ENCODE measurements at regions of chr17 and their contacts with region 1.

Region 1: DNA sequence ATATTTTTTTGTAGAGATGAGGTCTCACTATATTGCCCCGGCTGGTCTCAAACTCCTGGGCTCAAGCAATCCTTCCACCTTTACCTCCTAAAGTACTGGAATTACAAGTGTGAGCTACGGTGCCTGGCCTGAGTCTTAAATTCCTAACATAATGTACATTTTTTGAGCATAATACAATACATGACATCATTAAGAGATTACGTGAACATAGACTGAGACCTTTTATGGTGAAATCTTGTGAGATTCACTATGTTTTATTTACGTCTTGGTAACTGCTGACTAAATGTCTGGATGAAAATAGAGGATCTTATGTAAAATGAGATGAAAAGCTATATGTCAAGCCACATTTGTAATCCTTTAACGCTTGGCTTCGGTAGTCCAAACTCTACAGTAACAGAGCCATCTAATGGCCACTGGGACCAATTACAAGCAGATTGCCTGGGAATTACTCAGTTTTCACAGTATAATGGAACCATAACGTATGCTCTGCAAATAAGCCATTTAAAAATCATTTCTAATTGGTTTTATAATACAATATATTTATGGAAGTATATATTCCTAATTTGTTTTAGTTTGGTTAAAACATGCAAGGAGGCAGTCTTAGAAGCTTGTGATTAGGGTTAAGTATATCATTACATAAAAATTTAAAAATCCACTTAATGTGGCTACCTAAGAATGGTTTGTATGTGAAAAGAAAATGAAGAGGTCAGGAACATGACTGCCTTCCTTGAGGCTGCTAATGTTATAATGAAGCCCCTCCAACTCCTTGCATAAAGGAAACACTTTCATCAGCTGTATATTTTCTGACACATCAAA is 8.1 kb upstream of the EFCAB13 start:
- DNase-seq: peak; percentile 89
- H3K4me3 ChIP-seq: no peak overlapping the region
- H3K27ac ChIP-seq: peak overlapping the region; percentile 90
- H3K4me1 ChIP-seq: peaks cover 46% of the 10 kb centered on the region
- H3K27me3 ChIP-seq: no peaks in the 10 kb centered on the region
- CTCF ChIP-seq: peak; percentile 56 to 63
- POLR2A ChIP-seq: no peak

Region 2: GRCh38 chr17:46940621-46941404 is 374.8 kb before region 1 on chr17:
- CTCF ChIA-PET with region 1: interaction called, 30 read pairs
- POLR2A ChIA-PET with region 1: no interaction called
- dilution Hi-C with region 1: no loop called
- intact Hi-C with region 1: loop called (anchors 5 kb)
- DNase-seq: peak; percentile 78
- H3K4me3 ChIP-seq: no peak overlapping the region
- H3K27ac ChIP-seq: no peak overlapping the region
- H3K4me1 ChIP-seq: peaks cover 11% of the 10 kb centered on the region
- H3K27me3 ChIP-seq: no peaks in the 10 kb centered on the region
- CTCF ChIP-seq: peak; percentile 90 to 95
- POLR2A ChIP-seq: peak; percentile 40

Region 3: GRCh38 chr17:47162013-47162622 is 153.5 kb before region 1 on chr17:
- CTCF ChIA-PET with region 1: interaction called, 23 read pairs
- POLR2A ChIA-PET with region 1: no interaction called
- dilution Hi-C with region 1: no loop called
- intact Hi-C with region 1: loop called (anchors 5 kb)
- DNase-seq: peak; percentile 68
- H3K4me3 ChIP-seq: no peak overlapping the region
- H3K27ac ChIP-seq: no peak overlapping the region
- H3K4me1 ChIP-seq: no peaks in the 10 kb centered on the region
- H3K27me3 ChIP-seq: no peaks in the 10 kb centered on the region
- CTCF ChIP-seq: no peak
- POLR2A ChIP-seq: no peak

Region 4: DNA sequence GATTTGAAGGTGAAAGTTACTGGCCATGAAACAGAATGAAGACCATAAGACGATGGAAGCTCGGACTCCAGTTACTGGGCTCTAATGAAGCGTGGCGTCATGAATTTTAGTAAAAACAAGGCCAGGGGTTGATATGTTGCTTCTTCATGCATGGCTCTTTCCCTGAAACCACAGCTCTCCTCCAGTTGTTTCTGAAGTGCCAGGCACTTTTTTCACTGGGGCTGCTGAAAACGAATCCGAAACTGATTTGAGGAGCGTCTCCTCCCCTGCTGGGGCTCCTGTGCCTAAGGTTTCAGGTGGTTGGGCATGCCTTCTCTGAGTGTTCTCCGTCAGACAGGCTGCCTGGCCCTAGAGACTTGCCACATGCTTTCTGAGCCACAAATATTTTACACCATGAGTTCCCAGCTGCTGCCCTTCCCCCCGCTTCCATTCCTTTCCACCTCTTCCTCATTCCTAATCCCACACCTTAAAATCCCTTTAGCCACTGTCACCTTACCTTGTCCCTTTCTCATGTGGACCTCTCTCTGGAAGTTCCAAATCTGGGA is 110.2 kb before region 1 on chr17:
- CTCF ChIA-PET with region 1: interaction called, 15 read pairs
- POLR2A ChIA-PET with region 1: no interaction called
- dilution Hi-C with region 1: no loop called
- intact Hi-C with region 1: no loop called
- DNase-seq: no peak
- H3K4me3 ChIP-seq: no peak overlapping the region
- H3K27ac ChIP-seq: no peak overlapping the region
- H3K4me1 ChIP-seq: no peaks in the 10 kb centered on the region
- H3K27me3 ChIP-seq: no peaks in the 10 kb centered on the region
- CTCF ChIP-seq: no peak
- POLR2A ChIP-seq: no peak

Region 5: DNA sequence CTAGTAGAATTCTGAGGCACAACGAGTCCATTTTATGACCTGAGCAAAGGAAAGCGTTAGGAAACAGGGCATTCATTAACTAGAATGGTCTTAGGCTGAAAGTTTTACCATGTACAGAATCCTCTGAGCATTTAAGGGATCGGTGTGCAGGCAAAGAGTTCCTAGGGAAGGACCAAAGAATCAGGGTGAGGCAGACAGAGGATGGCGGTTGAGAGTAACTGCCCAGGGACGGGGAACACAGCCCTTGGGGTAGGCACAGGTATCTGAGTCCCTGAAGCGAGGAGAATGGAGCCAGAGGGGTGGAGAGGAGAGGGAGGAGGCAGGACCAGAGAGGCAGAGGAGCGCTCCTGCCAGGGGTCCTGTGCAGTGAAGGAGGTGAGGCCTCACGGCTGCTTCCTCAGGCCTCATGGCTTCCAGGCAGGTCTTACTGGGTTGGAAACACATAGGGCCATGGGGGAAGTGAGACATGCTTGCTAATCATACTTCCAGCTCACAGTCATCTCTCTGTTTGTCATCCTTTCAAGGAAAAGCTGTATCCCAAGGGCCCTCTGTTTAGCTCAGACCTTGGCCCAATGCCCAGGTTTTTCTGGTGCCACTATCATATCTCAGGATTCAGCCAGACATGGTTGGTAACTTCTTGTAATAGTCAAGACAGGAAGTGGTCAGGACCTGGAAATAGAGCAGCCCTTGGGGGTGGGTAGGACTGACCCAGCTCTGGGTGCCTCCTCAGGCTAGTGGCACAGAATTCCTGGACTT is 75.9 kb before region 1 on chr17:
- CTCF ChIA-PET with region 1: interaction called, 53 read pairs
- POLR2A ChIA-PET with region 1: interaction called, 8 read pairs
- dilution Hi-C with region 1: no loop called
- intact Hi-C with region 1: loop called (anchors 1 kb)
- DNase-seq: peak; percentile 99
- H3K4me3 ChIP-seq: no peak overlapping the region
- H3K27ac ChIP-seq: peak overlapping the region; percentile 100
- H3K4me1 ChIP-seq: peaks cover 24% of the 10 kb centered on the region
- H3K27me3 ChIP-seq: no peaks in the 10 kb centered on the region
- CTCF ChIP-seq: no peak
- POLR2A ChIP-seq: peak; percentile 80

Region 6: DNA sequence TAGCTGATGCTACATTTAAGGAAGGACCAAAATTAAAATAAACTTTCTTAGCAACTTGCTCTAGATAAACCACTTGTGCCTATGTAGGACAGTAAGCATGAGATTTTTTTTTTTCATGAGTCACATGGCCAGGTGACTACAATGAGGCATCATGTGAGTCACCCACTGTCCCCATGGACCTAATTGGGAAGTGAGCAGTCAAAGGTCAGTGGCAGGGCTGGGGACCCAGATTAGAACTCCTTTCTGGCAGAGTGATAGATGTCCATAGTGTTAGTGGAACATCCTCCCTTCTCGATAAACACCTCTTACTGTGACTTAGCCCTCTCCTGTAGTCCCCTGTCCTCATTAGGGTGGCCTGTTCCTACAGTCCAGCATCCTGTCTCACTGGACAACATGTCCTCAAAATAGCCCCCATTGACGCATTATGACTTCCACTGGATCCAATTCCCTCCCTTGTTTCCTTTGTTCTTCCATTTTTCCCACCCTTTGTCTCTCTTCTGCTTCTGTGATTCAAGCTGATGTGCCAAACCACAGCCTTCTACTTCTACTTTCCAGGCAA is 49.6 kb before region 1 on chr17:
- CTCF ChIA-PET with region 1: interaction called, 10 read pairs
- POLR2A ChIA-PET with region 1: no interaction called
- dilution Hi-C with region 1: no loop called
- intact Hi-C with region 1: no loop called
- DNase-seq: peak; percentile 43
- H3K4me3 ChIP-seq: no peak overlapping the region
- H3K27ac ChIP-seq: peak overlapping the region; percentile 42
- H3K4me1 ChIP-seq: peaks cover 37% of the 10 kb centered on the region
- H3K27me3 ChIP-seq: no peaks in the 10 kb centered on the region
- CTCF ChIP-seq: no peak
- POLR2A ChIP-seq: no peak

Region 7: GRCh38 chr17:47305302-47305923 is 10.2 kb before region 1 on chr17:
- CTCF ChIA-PET with region 1: interaction called, 27 read pairs
- POLR2A ChIA-PET with region 1: interaction called, 3 read pairs
- dilution Hi-C with region 1: no loop called
- intact Hi-C with region 1: loop called (anchors 1 kb)
- DNase-seq: peak; percentile 98
- H3K4me3 ChIP-seq: peak overlapping the region in 1 of 3 experiments; percentile 1
- H3K27ac ChIP-seq: peak overlapping the region; percentile 93
- H3K4me1 ChIP-seq: peaks cover 22% of the 10 kb centered on the region
- H3K27me3 ChIP-seq: no peaks in the 10 kb centered on the region
- CTCF ChIP-seq: no peak
- POLR2A ChIP-seq: no peak

Region 8: GRCh38 chr17:47413872-47414271 is 98.2 kb after region 1 on chr17:
- CTCF ChIA-PET with region 1: no interaction called
- POLR2A ChIA-PET with region 1: no interaction called
- dilution Hi-C with region 1: no loop called
- intact Hi-C with region 1: no loop called
- DNase-seq: no peak
- H3K4me3 ChIP-seq: no peak overlapping the region
- H3K27ac ChIP-seq: no peak overlapping the region
- H3K4me1 ChIP-seq: no peaks in the 10 kb centered on the region
- H3K27me3 ChIP-seq: no peaks in the 10 kb centered on the region
- CTCF ChIP-seq: no peak
- POLR2A ChIP-seq: no peak

Measured in endothelial cell of umbilical vein (primary cell).